ENCODE measurements at regions of chr17 and their contacts with region 1.

Region 1: DNA sequence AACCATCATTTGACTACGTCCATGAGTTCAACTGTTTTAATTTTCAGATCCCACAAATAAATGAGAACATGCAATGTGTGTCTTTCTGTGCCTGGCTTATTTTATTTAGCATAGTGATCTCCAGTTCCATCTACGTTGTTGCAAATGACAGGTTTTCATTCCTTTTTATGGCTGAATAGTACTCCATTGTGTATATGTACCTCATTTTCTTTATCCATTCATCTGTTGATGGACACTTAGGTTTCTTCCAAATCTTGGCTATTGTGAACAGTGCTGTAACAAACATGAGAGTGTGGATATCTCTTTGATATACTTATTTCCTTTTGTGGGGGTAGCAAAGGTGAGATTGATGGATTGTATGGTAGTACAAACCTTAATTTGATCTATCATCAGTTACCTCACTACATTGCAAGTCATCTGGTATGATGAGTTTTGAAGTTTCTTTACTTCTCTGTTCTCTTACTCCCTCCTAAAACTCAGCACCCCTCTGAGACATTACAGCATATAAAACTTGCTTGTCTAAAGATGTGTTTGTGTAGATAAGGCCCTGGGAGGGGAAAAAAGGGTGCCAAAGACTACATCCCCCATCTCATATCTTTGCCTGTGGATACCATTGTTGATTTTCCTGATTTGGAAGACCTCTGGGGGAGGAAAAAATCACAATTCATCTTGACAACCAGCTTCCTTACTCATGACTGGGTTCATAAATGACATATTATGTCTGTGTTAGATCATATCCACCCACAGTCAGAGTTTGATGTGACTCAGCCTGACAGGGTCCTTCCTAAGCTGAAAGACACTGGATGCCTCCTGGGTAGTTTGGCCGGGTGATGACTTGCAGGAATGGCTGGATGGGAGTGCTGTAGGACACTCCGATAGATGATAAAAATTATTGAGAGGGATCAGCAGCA is 47.6 kb downstream of the ABCA9 start:
- DNase-seq: no peak
- ATAC-seq: no peak
- H3K4me3 Mint-ChIP-seq: no peak overlapping the region
- H3K27ac Mint-ChIP-seq: no peak overlapping the region
- H3K4me1 Mint-ChIP-seq: no peaks in the 10 kb centered on the region
- H3K27me3 Mint-ChIP-seq: no peaks in the 10 kb centered on the region
- CTCF ChIP-seq: no peak

Region 2: GRCh38 chr17:68924786-68925720 is 88.1 kb before region 1 on chr17:
- CTCF ChIA-PET with region 1: no interaction called
- POLR2A ChIA-PET with region 1: no interaction called
- intact Hi-C with region 1: no loop called
- DNase-seq: no peak
- ATAC-seq: no peak
- H3K4me3 Mint-ChIP-seq: no peak overlapping the region
- H3K27ac Mint-ChIP-seq: no peak overlapping the region
- H3K4me1 Mint-ChIP-seq: no peaks in the 10 kb centered on the region
- H3K27me3 Mint-ChIP-seq: peaks cover 2% of the 10 kb centered on the region
- CTCF ChIP-seq: no peak

Region 3: GRCh38 chr17:68961214-68961882 is 51.8 kb before region 1 on chr17:
- CTCF ChIA-PET with region 1: no interaction called
- POLR2A ChIA-PET with region 1: no interaction called
- intact Hi-C with region 1: loop called (anchors 10 kb)
- DNase-seq: no peak
- ATAC-seq: no peak
- H3K4me3 Mint-ChIP-seq: no peak overlapping the region
- H3K27ac Mint-ChIP-seq: no peak overlapping the region
- H3K4me1 Mint-ChIP-seq: no peaks in the 10 kb centered on the region
- H3K27me3 Mint-ChIP-seq: no peaks in the 10 kb centered on the region
- CTCF ChIP-seq: no peak

Measured in activated B cell treated with CpG ODN at 0.5 μM for 24 hours (primary cell).